ENCODE measurements at regions of chr2 and their contacts with region 1.

Region 1: GRCh38 chr2:204108330-204108751 is 171.8 kb downstream of the ICOS start:
- DNase-seq: peak; percentile 56 to 67 (median 61)
- H3K4me3 ChIP-seq: no peak overlapping the region
- H3K4me3 Mint-ChIP-seq: peak overlapping the region; percentile 28 to 94 (median 86)
- H3K27ac ChIP-seq: no peak overlapping the region
- H3K27ac Mint-ChIP-seq: peak overlapping the region; percentile 15 to 89 (median 64)
- H3K4me1 ChIP-seq: peaks cover 30% of the 10 kb centered on the region
- H3K4me1 Mint-ChIP-seq: peaks cover 29 to 47% (median 39%) of the 10 kb centered on the region in 4 donors
- H3K27me3 ChIP-seq: no peaks in the 10 kb centered on the region
- H3K27me3 Mint-ChIP-seq: no peaks in the 10 kb centered on the region

Region 2: DNA sequence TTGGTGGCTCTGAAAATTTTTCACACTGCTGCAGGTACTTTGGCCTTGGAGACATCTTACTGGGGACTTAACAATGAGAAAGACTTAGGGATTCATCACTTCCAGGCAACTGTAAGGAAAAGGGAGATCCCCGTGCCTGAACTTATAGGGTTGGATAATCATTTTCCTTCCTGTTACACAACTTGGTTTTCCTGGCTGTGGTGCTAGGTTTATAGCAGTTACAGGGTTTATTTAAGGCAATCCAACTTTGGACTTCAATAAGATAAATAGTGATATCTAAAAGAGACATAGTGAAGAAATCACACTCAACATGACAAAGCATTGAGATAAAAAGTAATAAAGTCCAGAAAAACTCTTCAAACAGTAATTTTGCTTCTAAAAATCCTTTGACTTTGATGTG is 503.0 kb before region 1 on chr2:
- CTCF ChIA-PET with region 1: no interaction called
- POLR2A ChIA-PET with region 1: no interaction called
- intact Hi-C with region 1: no loop called
- DNase-seq: no peak
- H3K4me3 ChIP-seq: no peak overlapping the region
- H3K4me3 Mint-ChIP-seq: no peak overlapping the region
- H3K27ac ChIP-seq: no peak overlapping the region
- H3K27ac Mint-ChIP-seq: no peak overlapping the region
- H3K4me1 ChIP-seq: no peaks in the 10 kb centered on the region
- H3K4me1 Mint-ChIP-seq: peaks cover 0 to 5% (median 0%) of the 10 kb centered on the region in 4 donors
- H3K27me3 ChIP-seq: no peaks in the 10 kb centered on the region
- H3K27me3 Mint-ChIP-seq: no peaks in the 10 kb centered on the region

Region 3: DNA sequence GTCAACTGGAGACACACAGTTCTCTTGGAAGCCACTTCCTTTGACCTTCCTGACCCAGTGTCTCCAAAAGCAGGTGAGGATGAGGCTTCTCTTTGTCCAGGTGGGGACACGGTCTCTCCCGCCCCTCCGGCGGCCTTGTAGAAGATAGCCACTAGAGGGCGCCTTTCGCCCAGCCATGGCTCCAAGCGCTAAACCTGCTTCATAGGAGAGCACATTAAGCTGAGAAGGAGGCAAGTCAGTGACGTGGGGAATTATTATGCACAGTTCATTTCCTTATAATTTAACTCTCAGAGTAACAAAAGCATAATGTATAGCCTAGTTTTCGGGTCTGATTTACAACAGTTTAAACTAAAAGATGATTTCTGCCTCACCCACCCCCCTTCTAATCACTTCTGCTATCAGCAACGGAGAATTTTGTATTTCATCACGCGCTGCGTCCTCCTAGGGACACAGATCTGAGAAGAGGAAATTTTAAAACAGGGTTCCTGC is 37.0 kb after region 1 on chr2:
- CTCF ChIA-PET with region 1: interaction called, 14 read pairs
- POLR2A ChIA-PET with region 1: no interaction called
- intact Hi-C with region 1: loop called (anchors 1 kb)
- DNase-seq: peak; percentile 68 to 76 (median 74)
- H3K4me3 ChIP-seq: peak overlapping the region; percentile 25 to 40
- H3K4me3 Mint-ChIP-seq: peak overlapping the region; percentile 78 to 90 (median 85)
- H3K27ac ChIP-seq: no peak overlapping the region
- H3K27ac Mint-ChIP-seq: peak overlapping the region in 6 of 7 donors; percentile 20 to 91 (median 56)
- H3K4me1 ChIP-seq: peaks cover 11% of the 10 kb centered on the region
- H3K4me1 Mint-ChIP-seq: peaks cover 0 to 11% (median 9%) of the 10 kb centered on the region in 4 donors
- H3K27me3 ChIP-seq: no peaks in the 10 kb centered on the region
- H3K27me3 Mint-ChIP-seq: peaks cover 3 to 16% of the 10 kb centered on the region in 2 donors

Region 4: GRCh38 chr2:204260162-204260877 is 152.0 kb after region 1 on chr2:
- CTCF ChIA-PET with region 1: interaction called, 4 read pairs
- POLR2A ChIA-PET with region 1: no interaction called
- intact Hi-C with region 1: loop called (anchors 1 kb)
- DNase-seq: peak; percentile 17 to 40 (median 23)
- H3K4me3 ChIP-seq: no peak overlapping the region
- H3K4me3 Mint-ChIP-seq: no peak overlapping the region
- H3K27ac ChIP-seq: no peak overlapping the region
- H3K27ac Mint-ChIP-seq: no peak overlapping the region
- H3K4me1 ChIP-seq: no peaks in the 10 kb centered on the region
- H3K4me1 Mint-ChIP-seq: peaks cover 0 to 2% (median 0%) of the 10 kb centered on the region in 4 donors
- H3K27me3 ChIP-seq: no peaks in the 10 kb centered on the region
- H3K27me3 Mint-ChIP-seq: peaks cover 19 to 26% of the 10 kb centered on the region in 2 donors

Region 5: GRCh38 chr2:204691911-204692510 is 583.7 kb after region 1 on chr2:
- CTCF ChIA-PET with region 1: interaction called, 4 read pairs
- POLR2A ChIA-PET with region 1: no interaction called
- intact Hi-C with region 1: loop called (anchors 5 kb)
- DNase-seq: peak in 3 of 5 donors; percentile 13 to 24 (median 20)
- H3K4me3 ChIP-seq: no peak overlapping the region
- H3K4me3 Mint-ChIP-seq: no peak overlapping the region
- H3K27ac ChIP-seq: no peak overlapping the region
- H3K27ac Mint-ChIP-seq: no peak overlapping the region
- H3K4me1 ChIP-seq: no peaks in the 10 kb centered on the region
- H3K4me1 Mint-ChIP-seq: peaks cover 0 to 11% (median 8%) of the 10 kb centered on the region in 4 donors
- H3K27me3 ChIP-seq: no peaks in the 10 kb centered on the region
- H3K27me3 Mint-ChIP-seq: peaks cover 0 to 1% of the 10 kb centered on the region in 2 donors

Region 6: GRCh38 chr2:205680067-205680466 is 1571.7 kb after region 1 on chr2:
- CTCF ChIA-PET with region 1: interaction called, 6 read pairs
- POLR2A ChIA-PET with region 1: no interaction called
- intact Hi-C with region 1: loop called (anchors 1 kb)
- DNase-seq: peak in 4 of 5 donors; percentile 32 to 39 (median 38)
- H3K4me3 ChIP-seq: no peak overlapping the region
- H3K4me3 Mint-ChIP-seq: peak overlapping the region in 4 of 8 donors; percentile 45 to 63 (median 50)
- H3K27ac ChIP-seq: no peak overlapping the region
- H3K27ac Mint-ChIP-seq: no peak overlapping the region
- H3K4me1 ChIP-seq: peaks cover 18% of the 10 kb centered on the region
- H3K4me1 Mint-ChIP-seq: peaks cover 5 to 29% (median 20%) of the 10 kb centered on the region in 4 donors
- H3K27me3 ChIP-seq: peaks cover 22% of the 10 kb centered on the region
- H3K27me3 Mint-ChIP-seq: peaks cover 35 to 36% of the 10 kb centered on the region in 2 donors

Region 7: DNA sequence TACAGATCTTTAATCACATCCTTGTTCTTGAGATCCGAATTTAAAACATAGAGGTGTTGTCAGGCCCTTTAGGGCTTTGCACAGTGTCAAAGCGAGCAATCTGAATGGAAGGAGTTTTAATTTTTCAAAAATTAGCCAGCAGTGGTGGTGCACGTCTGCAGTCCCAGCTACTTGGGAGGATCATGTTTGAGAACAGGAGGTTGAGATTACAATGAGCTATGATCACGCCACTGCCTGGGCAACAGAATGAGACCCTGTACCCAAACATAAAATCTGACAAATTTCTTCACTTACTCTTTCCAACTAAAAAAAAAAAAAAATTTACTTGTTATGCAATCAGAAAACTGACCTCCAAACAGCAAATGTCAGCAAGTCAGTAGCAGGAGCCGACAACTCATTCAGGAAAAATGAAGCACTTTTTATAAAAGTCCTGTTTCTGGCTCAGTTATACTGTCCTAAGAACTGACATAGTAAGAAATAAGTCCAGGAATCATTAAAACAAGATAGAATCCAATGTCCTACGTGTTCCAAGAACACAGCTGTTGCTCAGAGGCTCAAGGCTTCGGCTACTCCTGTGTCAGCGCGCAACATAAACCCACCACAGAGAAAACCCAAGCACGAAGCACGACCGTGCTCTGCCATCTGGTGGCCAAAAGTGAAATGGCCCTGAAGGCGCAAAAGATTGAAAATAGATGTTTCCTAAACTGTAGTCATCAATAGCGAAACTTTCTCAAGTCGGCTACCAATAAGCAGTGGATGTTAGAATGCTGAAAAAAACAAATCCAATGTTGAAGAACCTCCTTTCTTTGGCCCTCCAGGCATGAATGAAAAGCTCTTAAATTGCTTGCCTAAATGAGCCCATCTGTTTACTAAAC is 1839.5 kb after region 1 on chr2:
- CTCF ChIA-PET with region 1: interaction called, 4 read pairs
- POLR2A ChIA-PET with region 1: no interaction called
- intact Hi-C with region 1: loop called (anchors 1 kb)
- DNase-seq: peak in 4 of 5 donors; percentile 18 to 42 (median 33)
- H3K4me3 ChIP-seq: no peak overlapping the region
- H3K4me3 Mint-ChIP-seq: peak overlapping the region in 1 of 8 donors; percentile 23
- H3K27ac ChIP-seq: no peak overlapping the region
- H3K27ac Mint-ChIP-seq: no peak overlapping the region
- H3K4me1 ChIP-seq: no peaks in the 10 kb centered on the region
- H3K4me1 Mint-ChIP-seq: peaks cover 0 to 5% (median 0%) of the 10 kb centered on the region in 4 donors
- H3K27me3 ChIP-seq: no peaks in the 10 kb centered on the region
- H3K27me3 Mint-ChIP-seq: peaks cover 8 to 17% of the 10 kb centered on the region in 2 donors